Heart left ventricle (tissue), 16 donors: ENCODE measurements at regions of chr3 and their contacts with region 1.

Region 1: GRCh38 chr3:151146071-151146730 is 56.8 kb downstream of the GPR171 start:
- DNase-seq: peak; percentile 68 to 73 (median 70)
- ATAC-seq: peak; percentile 93 to 98 (median 94)
- H3K4me3 ChIP-seq: peak overlapping the region in 2 of 12 donors; percentile 8 to 17
- H3K27ac ChIP-seq: no peak overlapping the region
- H3K4me1 ChIP-seq: peaks cover 0 to 12% (median 6%) of the 10 kb centered on the region in 12 donors
- H3K27me3 ChIP-seq: peaks cover 0 to 7% (median 0%) of the 10 kb centered on the region in 9 donors
- CTCF ChIP-seq: peak; percentile 80 to 94 (median 88)
- POLR2A ChIP-seq: no peak

Region 2: GRCh38 chr3:150528354-150528797 is 617.8 kb before region 1 on chr3:
- intact Hi-C with region 1: loop called in 1 of 10 experiments (anchors 10 kb)
- DNase-seq: no peak
- ATAC-seq: no peak
- H3K4me3 ChIP-seq: no peak overlapping the region
- H3K27ac ChIP-seq: no peak overlapping the region
- H3K4me1 ChIP-seq: peaks cover 0 to 4% (median 0%) of the 10 kb centered on the region in 12 donors
- H3K27me3 ChIP-seq: no peaks in the 10 kb centered on the region
- CTCF ChIP-seq: peak in 9 of 12 donors; percentile 16 to 50 (median 28)
- POLR2A ChIP-seq: no peak

Region 3: DNA sequence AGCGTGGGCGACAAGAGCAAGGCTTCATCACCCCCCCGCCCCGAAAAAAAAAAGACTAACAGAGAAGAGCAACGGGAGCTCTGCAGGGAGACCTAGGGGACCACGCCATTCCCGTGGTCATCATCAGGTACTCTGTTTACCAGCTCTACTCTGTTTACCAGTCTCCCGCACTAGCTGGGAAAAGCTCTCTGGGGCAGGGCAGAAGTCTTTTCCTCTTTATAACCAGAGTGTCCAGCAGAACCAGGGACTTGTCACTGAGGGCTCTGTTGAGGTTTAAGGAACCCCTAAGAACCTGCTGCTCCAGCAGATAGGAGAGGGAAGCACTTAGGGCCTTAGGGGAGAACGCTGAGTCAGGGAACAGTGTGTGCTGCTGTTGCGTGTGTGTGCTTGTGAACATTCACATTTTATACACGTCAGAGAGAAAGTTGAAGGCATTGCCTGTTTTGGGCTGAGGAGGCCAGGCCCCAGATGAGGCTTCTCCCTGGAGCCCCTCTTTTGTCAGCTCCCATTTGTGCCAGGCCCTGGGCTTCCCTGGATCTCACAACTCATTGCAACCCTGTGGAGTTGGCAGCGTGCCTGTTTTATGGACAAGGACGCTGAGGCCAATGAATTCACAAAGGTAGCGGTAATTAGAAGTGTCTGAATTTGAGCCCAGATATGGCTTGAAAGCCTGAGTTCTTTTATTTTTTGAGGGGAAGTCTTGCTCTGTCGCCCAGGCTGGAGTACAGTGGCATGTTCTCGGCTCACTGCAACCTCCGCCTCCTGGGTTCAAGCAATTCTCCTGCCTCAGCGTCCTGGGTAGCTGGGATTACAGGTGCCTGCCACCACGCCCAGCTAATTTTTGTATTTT is 418.3 kb before region 1 on chr3:
- intact Hi-C with region 1: loop called in 6 of 10 experiments (anchors 2 to 5 kb)
- DNase-seq: peak in 2 of 5 donors; percentile 41 to 46
- ATAC-seq: peak; percentile 60 to 88 (median 82)
- H3K4me3 ChIP-seq: no peak overlapping the region
- H3K27ac ChIP-seq: peak overlapping the region in 5 of 12 donors; percentile 13 to 66 (median 30)
- H3K4me1 ChIP-seq: peaks cover 0 to 19% (median 3%) of the 10 kb centered on the region in 12 donors
- H3K27me3 ChIP-seq: no peaks in the 10 kb centered on the region
- CTCF ChIP-seq: no peak
- POLR2A ChIP-seq: peak in 1 of 2 donors; percentile 33

Region 4: GRCh38 chr3:150798122-150798626 is 348.0 kb before region 1 on chr3:
- intact Hi-C with region 1: loop called in 1 of 10 experiments (anchors 2 kb)
- DNase-seq: no peak
- ATAC-seq: no peak
- H3K4me3 ChIP-seq: no peak overlapping the region
- H3K27ac ChIP-seq: no peak overlapping the region
- H3K4me1 ChIP-seq: peaks cover 0 to 8% (median 0%) of the 10 kb centered on the region in 12 donors
- H3K27me3 ChIP-seq: peaks cover 0 to 11% (median 0%) of the 10 kb centered on the region in 9 donors
- CTCF ChIP-seq: no peak
- POLR2A ChIP-seq: no peak

Region 5: GRCh38 chr3:150870396-150870795 is 275.8 kb before region 1 on chr3:
- intact Hi-C with region 1: loop called in 3 of 10 experiments (anchors 5 to 10 kb)
- DNase-seq: no peak
- ATAC-seq: peak in 2 of 4 donors; percentile 49 to 73
- H3K4me3 ChIP-seq: no peak overlapping the region
- H3K27ac ChIP-seq: peak overlapping the region in 5 of 12 donors; percentile 27 to 46 (median 42)
- H3K4me1 ChIP-seq: peaks cover 0 to 9% (median 0%) of the 10 kb centered on the region in 12 donors
- H3K27me3 ChIP-seq: no peaks in the 10 kb centered on the region
- CTCF ChIP-seq: no peak
- POLR2A ChIP-seq: no peak

Region 6: DNA sequence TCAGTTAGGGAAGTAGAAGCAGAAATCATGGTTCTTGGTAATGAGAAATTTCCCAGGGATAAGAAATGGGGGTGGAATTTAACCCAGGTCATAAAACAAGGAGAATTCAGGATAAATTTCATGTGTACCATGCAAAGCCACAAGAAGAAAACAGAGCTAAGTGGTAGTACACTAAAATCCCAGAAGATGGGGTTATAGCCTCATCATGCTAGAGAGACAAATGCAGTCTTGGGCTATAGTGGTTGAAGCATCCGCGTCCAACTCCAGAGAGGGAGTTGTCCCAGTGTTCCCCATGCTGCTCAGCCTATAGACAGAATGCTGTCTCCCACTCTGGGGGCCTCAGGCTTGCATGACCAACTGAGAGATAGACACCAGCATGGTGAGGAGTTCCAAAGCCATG is 137.5 kb before region 1 on chr3:
- intact Hi-C with region 1: loop called in 1 of 10 experiments (anchors 5 kb)
- DNase-seq: no peak
- ATAC-seq: no peak
- H3K4me3 ChIP-seq: no peak overlapping the region
- H3K27ac ChIP-seq: no peak overlapping the region
- H3K4me1 ChIP-seq: no peaks in the 10 kb centered on the region
- H3K27me3 ChIP-seq: no peaks in the 10 kb centered on the region
- CTCF ChIP-seq: peak in 4 of 12 donors; percentile 15 to 23 (median 20)
- POLR2A ChIP-seq: no peak

Region 7: GRCh38 chr3:151101270-151101969 is 44.8 kb before region 1 on chr3:
- intact Hi-C with region 1: no loop called
- DNase-seq: peak in 2 of 5 donors; percentile 17 to 25
- ATAC-seq: peak; percentile 47 to 86 (median 56)
- H3K4me3 ChIP-seq: no peak overlapping the region
- H3K27ac ChIP-seq: peak overlapping the region in 3 of 12 donors; percentile 54 to 62 (median 56)
- H3K4me1 ChIP-seq: peaks cover 0 to 4% (median 0%) of the 10 kb centered on the region in 12 donors
- H3K27me3 ChIP-seq: no peaks in the 10 kb centered on the region
- CTCF ChIP-seq: no peak
- POLR2A ChIP-seq: no peak

Region 8: GRCh38 chr3:151305101-151305750 is 159.0 kb after region 1 on chr3:
- intact Hi-C with region 1: no loop called
- DNase-seq: no peak
- ATAC-seq: peak in 2 of 4 donors; percentile 59 to 70
- H3K4me3 ChIP-seq: no peak overlapping the region
- H3K27ac ChIP-seq: no peak overlapping the region
- H3K4me1 ChIP-seq: peaks cover 0 to 8% (median 0%) of the 10 kb centered on the region in 12 donors
- H3K27me3 ChIP-seq: peaks cover 0 to 3% (median 0%) of the 10 kb centered on the region in 9 donors
- CTCF ChIP-seq: no peak
- POLR2A ChIP-seq: no peak